ENCODE measurements at regions of chr3 and their contacts with region 1.

Region 1: GRCh38 chr3:108221911-108222852 is at the start of gene IFT57:
- DNase-seq: peak; percentile 93
- H3K4me3 Mint-ChIP-seq: peak within 1 kb of the TSS; percentile 94
- H3K27ac Mint-ChIP-seq: peak within 1 kb of the TSS; percentile 89
- H3K4me1 Mint-ChIP-seq: peaks cover 41% of the 10 kb centered on the region
- H3K27me3 Mint-ChIP-seq: peaks cover 2% of the 10 kb centered on the region
- total RNA-seq, gene IFT57: 21.6 and 22.0 TPM in 2 replicates

Region 2: DNA sequence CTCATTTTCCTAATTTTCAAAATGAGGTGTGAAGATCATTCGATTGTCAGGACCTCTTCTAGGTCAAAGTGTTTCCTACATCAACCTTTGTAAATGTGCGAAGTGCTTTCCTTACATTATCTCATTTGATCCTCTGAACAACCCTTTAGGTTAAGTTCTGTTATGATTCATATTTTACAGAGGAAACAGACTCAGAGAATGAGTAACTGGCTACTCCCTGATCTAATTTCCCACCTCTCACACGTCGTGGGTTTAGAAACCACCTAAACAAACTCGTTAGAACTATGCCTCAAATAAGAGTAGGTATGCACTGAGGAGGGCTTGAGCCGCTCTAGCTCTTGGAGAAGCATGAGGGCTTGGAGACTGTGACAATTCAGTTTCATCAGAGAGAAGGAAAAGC is 279.9 kb before region 1 on chr3:
- intact Hi-C with region 1: loop called (anchors 1 kb)
- DNase-seq: peak; percentile 15
- H3K4me3 Mint-ChIP-seq: no peak overlapping the region
- H3K27ac Mint-ChIP-seq: peak overlapping the region; percentile 78
- H3K4me1 Mint-ChIP-seq: peaks cover 23% of the 10 kb centered on the region
- H3K27me3 Mint-ChIP-seq: peaks cover under 1% of the 10 kb centered on the region

Region 3: GRCh38 chr3:108124337-108125152 is 97.6 kb before region 1 on chr3:
- intact Hi-C with region 1: loop called (anchors 2 kb)
- DNase-seq: peak; percentile 68
- H3K4me3 Mint-ChIP-seq: peak overlapping the region; percentile 96
- H3K27ac Mint-ChIP-seq: peak overlapping the region; percentile 99
- H3K4me1 Mint-ChIP-seq: peaks cover 66% of the 10 kb centered on the region
- H3K27me3 Mint-ChIP-seq: no peaks in the 10 kb centered on the region

Region 4: DNA sequence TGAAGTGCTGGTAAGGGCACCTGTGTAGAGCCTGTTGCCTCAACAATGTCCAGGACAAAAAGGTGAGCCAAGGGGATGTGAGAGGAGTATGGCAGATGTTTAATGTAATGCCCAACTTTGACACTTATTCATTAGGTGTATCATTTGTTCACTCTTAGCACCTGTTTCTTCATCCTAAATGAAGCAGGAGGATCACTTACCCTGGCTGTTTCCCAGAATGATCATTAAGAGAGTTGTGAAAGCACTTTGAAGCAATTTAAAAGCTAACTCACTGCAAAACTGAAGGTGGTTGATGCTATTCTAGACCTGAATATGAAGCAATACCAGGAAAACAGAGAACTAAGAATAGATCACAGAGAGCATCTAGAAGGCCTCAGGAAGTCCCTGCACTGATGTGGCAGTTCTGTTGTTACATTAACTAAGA is 70.7 kb after region 1 on chr3:
- intact Hi-C with region 1: loop called (anchors 1 kb)
- DNase-seq: no peak
- H3K4me3 Mint-ChIP-seq: no peak overlapping the region
- H3K27ac Mint-ChIP-seq: peak overlapping the region; percentile 80
- H3K4me1 Mint-ChIP-seq: peaks cover 60% of the 10 kb centered on the region
- H3K27me3 Mint-ChIP-seq: no peaks in the 10 kb centered on the region

Region 5: GRCh38 chr3:108305484-108306172 is 83.4 kb after region 1 on chr3:
- intact Hi-C with region 1: no loop called
- DNase-seq: no peak
- H3K4me3 Mint-ChIP-seq: no peak overlapping the region
- H3K27ac Mint-ChIP-seq: no peak overlapping the region
- H3K4me1 Mint-ChIP-seq: peaks cover 35% of the 10 kb centered on the region
- H3K27me3 Mint-ChIP-seq: no peaks in the 10 kb centered on the region

Region 6: DNA sequence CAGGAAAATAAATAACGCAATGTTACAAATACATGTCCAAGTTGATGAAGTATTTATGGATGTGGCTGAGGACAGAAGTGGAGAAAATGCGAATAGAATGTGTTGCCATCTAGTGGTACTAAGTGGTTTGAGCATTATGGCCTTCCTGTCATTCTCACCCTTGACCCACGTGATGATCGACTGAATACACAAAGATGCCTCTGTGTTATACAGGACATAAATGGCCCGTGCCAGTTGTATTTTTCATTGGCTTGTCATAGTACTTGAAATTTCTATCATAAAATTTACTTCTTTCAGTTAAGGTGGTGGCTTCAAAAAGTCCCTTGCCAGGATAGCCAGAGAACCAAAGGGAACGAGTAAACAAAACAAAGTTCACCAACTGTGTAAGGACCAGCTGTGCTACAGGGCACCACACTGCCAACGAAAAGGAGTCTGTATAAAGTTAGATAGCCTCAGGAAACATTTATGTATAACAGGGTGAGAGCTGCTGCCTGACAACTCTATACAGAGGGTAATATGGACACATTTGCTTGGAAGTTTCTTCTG is 184.6 kb after region 1 on chr3:
- intact Hi-C with region 1: loop called (anchors 5 kb)
- DNase-seq: no peak
- H3K4me3 Mint-ChIP-seq: no peak overlapping the region
- H3K27ac Mint-ChIP-seq: no peak overlapping the region
- H3K4me1 Mint-ChIP-seq: peaks cover 7% of the 10 kb centered on the region
- H3K27me3 Mint-ChIP-seq: peaks cover 5% of the 10 kb centered on the region

Region 7: DNA sequence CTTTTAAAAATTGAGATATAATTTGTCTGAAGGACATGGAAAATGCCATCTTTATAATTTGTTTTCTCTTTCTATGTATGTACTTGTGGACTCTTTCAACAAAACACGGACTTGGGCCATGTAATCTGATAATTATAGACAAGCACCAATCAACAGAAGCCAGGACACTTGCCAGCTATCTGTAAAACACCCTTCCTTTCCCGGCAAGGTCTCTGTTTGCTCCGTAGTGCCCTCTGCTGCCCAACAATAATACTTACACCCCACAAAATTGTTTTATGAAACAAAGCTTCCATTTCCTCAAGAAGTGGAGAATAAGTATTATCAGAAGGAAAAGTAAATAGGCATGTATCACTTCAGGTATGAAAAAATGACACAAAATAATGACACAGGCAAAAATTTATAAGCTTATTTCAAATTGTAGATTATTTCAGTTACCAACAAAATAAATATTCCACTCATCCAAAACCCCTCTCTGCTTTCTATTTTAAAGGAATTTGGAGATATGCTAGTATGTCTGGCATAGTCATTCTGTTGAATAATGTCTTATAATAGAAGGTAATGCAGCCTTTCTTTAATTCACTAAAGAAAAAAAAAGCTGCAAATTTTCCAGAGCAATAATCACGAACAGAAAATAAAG is 255.4 kb after region 1 on chr3:
- intact Hi-C with region 1: loop called (anchors 5 kb)
- DNase-seq: peak; percentile 36
- H3K4me3 Mint-ChIP-seq: no peak overlapping the region
- H3K27ac Mint-ChIP-seq: no peak overlapping the region
- H3K4me1 Mint-ChIP-seq: peaks cover 1% of the 10 kb centered on the region
- H3K27me3 Mint-ChIP-seq: peaks cover 12% of the 10 kb centered on the region